H1 (cell line): ENCODE measurements at regions of chr14 and their contacts with region 1.

Region 1: DNA sequence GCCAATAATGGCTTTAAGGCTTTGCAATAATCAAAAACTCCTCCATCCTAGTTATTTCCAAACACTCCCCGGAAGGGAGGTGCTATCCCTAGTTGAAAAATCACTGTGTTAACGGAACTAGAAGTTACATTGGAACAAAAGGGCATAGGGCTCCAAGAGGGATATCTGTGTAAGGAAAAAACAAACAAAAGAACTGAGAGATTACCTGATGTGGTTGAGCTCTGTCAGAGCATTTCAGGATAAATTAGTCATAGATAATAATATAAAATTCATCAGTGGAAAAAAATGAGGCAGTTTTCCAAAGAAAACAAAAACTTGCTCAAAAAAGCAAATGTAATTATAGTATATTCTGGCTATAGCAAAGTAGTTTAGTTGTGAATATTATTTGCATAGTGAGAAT is 27.4 kb upstream of the PAPLN start:
- DNase-seq: no peak
- H3K4me3 ChIP-seq: no peak overlapping the region
- H3K27ac ChIP-seq: no peak overlapping the region
- H3K4me1 ChIP-seq: no peaks in the 10 kb centered on the region
- H3K27me3 ChIP-seq: no peaks in the 10 kb centered on the region
- CTCF ChIP-seq: no peak
- EP300 ChIP-seq: no peak
- POLR2A ChIP-seq: no peak
- RAD21 ChIP-seq: no peak

Region 2: DNA sequence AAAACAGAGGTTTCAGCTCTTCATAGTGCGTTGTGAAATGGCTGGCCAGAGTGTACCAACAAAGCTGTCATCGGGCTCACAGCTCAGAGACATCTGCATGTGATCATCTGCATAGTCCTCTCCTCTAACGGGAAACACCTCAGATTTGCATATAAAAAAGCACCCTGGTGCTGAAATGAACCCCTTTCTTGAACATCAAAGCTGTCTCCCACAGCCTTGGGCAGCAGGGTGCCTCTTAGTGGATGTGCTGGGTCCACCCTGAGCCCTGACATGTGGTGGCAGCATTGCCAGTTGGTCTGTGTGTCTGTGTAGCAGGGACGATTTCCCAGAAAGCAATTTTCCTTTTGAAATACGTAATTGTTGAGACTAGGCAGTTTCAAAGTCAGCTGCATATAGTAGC is 13.1 kb after region 1 on chr14:
- CTCF ChIA-PET with region 1: interaction called, 10 read pairs
- POLR2A ChIA-PET with region 1: no interaction called
- DNase-seq: no peak
- H3K4me3 ChIP-seq: no peak overlapping the region
- H3K27ac ChIP-seq: no peak overlapping the region
- H3K4me1 ChIP-seq: peaks cover 0 to 8% (median 4%) of the 10 kb centered on the region in 4 experiments; a peak in 5 of 7 replicates
- H3K27me3 ChIP-seq: no peaks in the 10 kb centered on the region
- CTCF ChIP-seq: no peak
- EP300 ChIP-seq: no peak
- POLR2A ChIP-seq: no peak
- RAD21 ChIP-seq: no peak; a peak in 1 of 4 replicates

Region 3: GRCh38 chr14:73241481-73242165 is 31.7 kb after region 1 on chr14:
- CTCF ChIA-PET with region 1: no interaction called
- POLR2A ChIA-PET with region 1: no interaction called
- DNase-seq: peak in 1 of 2 experiments; percentile 51
- H3K4me3 ChIP-seq: no peak overlapping the region
- H3K27ac ChIP-seq: no peak overlapping the region
- H3K4me1 ChIP-seq: peaks cover 3 to 30% (median 20%) of the 10 kb centered on the region in 4 experiments
- H3K27me3 ChIP-seq: peaks cover 6 to 29% (median 20%) of the 10 kb centered on the region in 4 experiments
- CTCF ChIP-seq: no peak
- EP300 ChIP-seq: no peak
- POLR2A ChIP-seq: no peak
- RAD21 ChIP-seq: no peak

Region 4: GRCh38 chr14:73397810-73398209 is 187.9 kb after region 1 on chr14:
- CTCF ChIA-PET with region 1: no interaction called
- POLR2A ChIA-PET with region 1: no interaction called
- DNase-seq: no peak
- H3K4me3 ChIP-seq: no peak overlapping the region
- H3K27ac ChIP-seq: no peak overlapping the region
- H3K4me1 ChIP-seq: no peaks in the 10 kb centered on the region
- H3K27me3 ChIP-seq: no peaks in the 10 kb centered on the region
- CTCF ChIP-seq: no peak
- EP300 ChIP-seq: no peak
- POLR2A ChIP-seq: no peak
- RAD21 ChIP-seq: no peak